Right cardiac atrium (tissue), 5 donors: ENCODE measurements at regions of chr7 and their contacts with region 1.

Region 1: GRCh38 chr7:22445140-22445743 is 54.7 kb downstream of the STEAP1B start:
- DNase-seq: peak; percentile 59 to 88 (median 86)
- ATAC-seq: peak; percentile 92 to 94
- H3K4me3 ChIP-seq: no peak overlapping the region
- H3K27ac ChIP-seq: peak overlapping the region; percentile 55
- H3K4me1 ChIP-seq: peaks cover 4% of the 10 kb centered on the region
- H3K27me3 ChIP-seq: no peaks in the 10 kb centered on the region

Region 2: DNA sequence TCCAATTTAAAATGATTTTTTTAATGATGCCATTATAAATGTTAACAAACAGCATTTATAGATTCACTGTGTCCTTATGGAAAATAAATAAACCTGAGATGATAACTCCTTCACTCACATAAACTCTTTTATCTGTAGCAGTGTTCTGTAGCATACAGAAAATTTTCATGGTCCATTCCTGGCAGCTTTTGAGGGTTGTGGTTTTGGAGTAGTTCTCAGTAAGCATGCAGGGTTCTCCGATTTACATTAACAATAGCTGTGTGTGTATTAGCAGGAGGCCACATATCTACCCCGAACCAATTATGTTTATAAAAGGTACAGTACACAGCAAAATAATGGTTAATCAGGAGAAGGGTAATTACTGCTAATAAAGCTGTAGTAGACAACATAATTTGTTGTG is 662.2 kb before region 1 on chr7:
- intact Hi-C with region 1: no loop called
- DNase-seq: no peak
- ATAC-seq: no peak
- H3K4me3 ChIP-seq: no peak overlapping the region
- H3K27ac ChIP-seq: no peak overlapping the region
- H3K4me1 ChIP-seq: no peaks in the 10 kb centered on the region
- H3K27me3 ChIP-seq: no peaks in the 10 kb centered on the region

Region 3: GRCh38 chr7:22356701-22357353 is 88.4 kb before region 1 on chr7 and contains the start of gene RAPGEF5:
- intact Hi-C with region 1: loop called in 1 of 4 experiments (anchors 10 kb)
- DNase-seq: peak in 2 of 3 donors; percentile 49 to 59
- ATAC-seq: peak; percentile 59 to 81
- H3K4me3 ChIP-seq: peak within 1 kb of the TSS; percentile 82
- H3K27ac ChIP-seq: no peak within 1 kb of the TSS
- H3K4me1 ChIP-seq: no peaks in the 10 kb centered on the region
- H3K27me3 ChIP-seq: no peaks in the 10 kb centered on the region
- total RNA-seq, gene RAPGEF5: 21.7 to 30.8 (median 28.2) TPM